Caco-2 (cell line): ENCODE measurements at regions of chr5 and their contacts with region 1.

Region 1: DNA sequence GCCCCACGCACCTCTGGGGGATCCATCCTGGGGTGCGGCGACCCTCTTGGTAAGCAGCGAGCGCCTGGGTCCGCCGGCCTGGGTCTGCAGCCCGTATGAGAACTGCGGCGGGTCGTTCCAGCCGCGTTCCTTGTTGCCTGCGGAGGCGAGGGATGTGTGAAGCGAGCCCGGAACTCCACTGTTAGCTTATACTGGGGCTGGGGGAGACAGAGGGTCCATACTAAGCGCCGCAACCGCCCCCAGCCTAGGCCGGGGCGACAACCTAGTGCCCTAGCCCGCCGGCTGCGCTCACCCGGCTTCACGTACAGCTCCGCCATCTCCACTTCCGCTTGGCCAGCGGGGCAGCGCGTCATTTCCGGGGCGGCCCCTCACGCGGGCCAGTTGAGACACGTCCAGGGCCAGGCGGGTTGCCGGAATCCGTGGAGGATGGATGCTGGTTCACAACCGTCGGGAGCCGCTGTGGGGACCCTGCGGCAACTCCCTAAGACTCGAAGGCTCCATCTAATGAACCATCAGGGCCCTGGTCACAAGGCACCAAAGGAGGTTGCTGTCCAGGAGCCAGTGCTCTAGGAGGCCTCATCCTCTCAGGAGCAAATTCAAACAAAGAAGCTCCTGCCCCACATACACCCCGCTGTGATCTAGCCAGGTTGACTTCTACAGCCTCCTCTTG is at the start of gene SRA1:
- DNase-seq: peak; percentile 93 to 94
- H3K4me3 ChIP-seq: peak within 1 kb of the TSS; percentile 79
- H3K4me3 Mint-ChIP-seq: peak within 1 kb of the TSS; percentile 87
- H3K27ac Mint-ChIP-seq: peak within 1 kb of the TSS; percentile 91
- H3K4me1 ChIP-seq: peaks cover 14% of the 10 kb centered on the region; the same call in 1 of the 2 replicates
- H3K4me1 Mint-ChIP-seq: peaks cover 35% of the 10 kb centered on the region
- H3K27me3 ChIP-seq: no peaks in the 10 kb centered on the region
- H3K27me3 Mint-ChIP-seq: no peaks in the 10 kb centered on the region
- CTCF ChIP-seq: peak in 1 of 2 experiments; percentile 1
- total RNA-seq, gene SRA1: 44.0 and 50.3 TPM in 2 replicates

Region 2: DNA sequence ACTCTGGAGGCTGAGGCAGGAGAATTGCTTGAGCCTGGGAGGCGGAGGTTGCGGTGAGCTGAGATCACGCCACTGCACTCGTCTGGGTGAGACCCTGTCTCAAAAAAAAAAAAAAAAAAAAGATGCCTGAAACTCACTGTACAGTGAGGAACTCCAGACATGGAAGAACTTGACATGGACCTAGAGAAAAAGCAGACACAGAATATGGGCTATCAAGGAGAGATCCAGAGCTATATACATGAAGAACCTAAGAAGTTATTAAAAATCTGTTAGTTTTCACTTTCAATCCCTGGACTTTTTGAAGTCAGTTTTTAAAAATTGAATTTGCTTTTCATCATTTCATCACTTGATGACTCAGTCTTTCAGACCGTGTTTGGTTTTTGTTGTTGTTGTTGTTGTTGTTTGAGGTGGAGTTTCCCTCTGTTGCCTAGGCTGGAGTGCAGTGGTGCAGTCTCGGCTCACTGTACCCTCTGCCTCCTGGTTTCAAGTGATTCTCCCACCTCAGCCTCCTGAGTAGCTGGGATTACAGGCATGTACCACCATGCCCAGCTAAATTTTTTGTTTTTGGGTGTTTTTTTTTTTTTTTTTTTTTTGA is 1195.3 kb before region 1 on chr5:
- CTCF ChIA-PET with region 1: no interaction called
- POLR2A ChIA-PET with region 1: no interaction called
- intact Hi-C with region 1: no loop called
- DNase-seq: no peak
- H3K4me3 ChIP-seq: no peak overlapping the region
- H3K4me3 Mint-ChIP-seq: no peak overlapping the region
- H3K27ac Mint-ChIP-seq: no peak overlapping the region
- H3K4me1 ChIP-seq: no peaks in the 10 kb centered on the region
- H3K4me1 Mint-ChIP-seq: no peaks in the 10 kb centered on the region
- H3K27me3 ChIP-seq: no peaks in the 10 kb centered on the region
- H3K27me3 Mint-ChIP-seq: no peaks in the 10 kb centered on the region
- CTCF ChIP-seq: no peak

Region 3: DNA sequence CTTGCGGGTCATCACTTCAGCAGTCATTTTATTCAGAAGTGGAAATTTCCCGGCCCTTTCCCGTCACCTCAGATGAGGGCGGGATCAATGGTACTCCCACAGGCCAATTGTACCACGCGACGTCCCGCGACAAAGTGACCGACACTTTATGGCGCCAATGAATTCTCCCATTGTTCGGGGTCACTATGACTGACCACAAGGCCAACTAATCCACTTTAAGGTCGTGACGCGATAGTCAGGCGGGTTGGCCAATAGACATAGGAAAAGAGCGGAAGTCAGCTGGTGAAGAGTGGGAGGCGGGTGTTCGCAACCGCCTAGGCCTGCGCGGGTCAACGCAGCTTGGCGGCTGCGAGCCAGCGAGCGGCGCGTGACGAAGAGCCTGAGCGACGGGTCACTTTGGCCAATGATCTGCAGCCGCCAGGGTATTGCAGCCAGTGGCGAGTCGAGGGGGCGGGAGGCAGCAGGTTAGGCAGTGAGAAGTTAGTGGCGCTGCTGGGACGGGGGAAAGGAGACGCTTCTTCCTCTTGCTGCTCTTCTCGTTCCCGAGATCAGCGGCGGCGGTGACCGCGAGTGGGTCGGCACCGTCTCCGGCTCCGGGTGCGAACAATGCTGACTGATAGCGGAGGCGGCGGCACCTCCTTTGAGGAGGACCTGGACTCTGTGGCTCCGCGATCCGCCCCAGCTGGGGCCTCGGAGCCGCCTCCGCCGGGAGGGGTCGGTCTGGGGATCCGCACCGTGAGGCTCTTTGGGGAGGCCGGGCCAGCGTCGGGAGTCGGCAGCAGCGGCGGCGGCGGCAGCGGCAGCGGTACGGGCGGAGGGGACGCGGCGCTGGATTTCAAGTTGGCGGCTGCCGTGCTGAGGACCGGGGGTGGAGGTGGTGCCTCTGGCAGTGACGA is 155.7 kb before region 1 on chr5 and contains the start of gene ANKHD1:
- CTCF ChIA-PET with region 1: no interaction called
- POLR2A ChIA-PET with region 1: no interaction called
- intact Hi-C with region 1: loop called (anchors 5 kb)
- DNase-seq: peak; percentile 99 to 100
- H3K4me3 ChIP-seq: peak within 1 kb of the TSS; percentile 72
- H3K4me3 Mint-ChIP-seq: no peak within 1 kb of the TSS
- H3K27ac Mint-ChIP-seq: no peak within 1 kb of the TSS
- H3K4me1 ChIP-seq: no peaks in the 10 kb centered on the region
- H3K4me1 Mint-ChIP-seq: peaks cover 7% of the 10 kb centered on the region
- H3K27me3 ChIP-seq: no peaks in the 10 kb centered on the region
- H3K27me3 Mint-ChIP-seq: no peaks in the 10 kb centered on the region
- CTCF ChIP-seq: no peak
- total RNA-seq, gene ANKHD1: 130 and 134 TPM in 2 replicates

Region 4: DNA sequence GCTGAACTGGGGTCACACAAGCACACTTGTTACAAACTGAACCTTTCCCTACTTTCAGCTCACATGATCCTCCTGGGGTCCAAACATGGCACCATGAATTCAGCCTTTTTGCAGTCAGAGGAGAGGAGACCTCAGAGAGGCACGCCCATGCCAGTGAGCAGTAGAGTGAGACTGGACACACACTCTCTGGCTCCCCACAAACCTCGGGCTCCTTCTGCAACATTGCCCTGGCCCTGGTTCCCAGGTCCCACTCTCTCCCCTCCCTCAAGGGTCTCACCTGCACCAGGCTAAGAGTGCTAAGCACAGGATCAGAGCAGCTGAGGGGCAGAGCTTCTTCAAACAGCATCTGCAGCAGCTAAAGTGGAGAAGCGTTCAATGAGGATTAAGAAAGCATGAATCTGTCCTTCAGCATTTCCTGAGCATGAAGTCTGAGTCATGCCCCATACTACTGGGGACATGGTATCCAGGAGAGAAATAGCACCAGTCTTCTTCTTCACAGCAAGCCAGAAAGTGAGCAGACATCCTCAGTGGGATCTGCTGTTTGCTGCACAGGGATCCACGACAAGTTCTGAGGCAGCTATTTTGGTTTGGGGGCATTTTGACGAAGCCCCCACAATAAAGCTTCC is 34.6 kb after region 1 on chr5:
- CTCF ChIA-PET with region 1: no interaction called
- POLR2A ChIA-PET with region 1: no interaction called
- intact Hi-C with region 1: no loop called
- DNase-seq: no peak
- H3K4me3 ChIP-seq: no peak overlapping the region
- H3K4me3 Mint-ChIP-seq: no peak overlapping the region
- H3K27ac Mint-ChIP-seq: no peak overlapping the region
- H3K4me1 ChIP-seq: no peaks in the 10 kb centered on the region
- H3K4me1 Mint-ChIP-seq: no peaks in the 10 kb centered on the region
- H3K27me3 ChIP-seq: no peaks in the 10 kb centered on the region
- H3K27me3 Mint-ChIP-seq: no peaks in the 10 kb centered on the region
- CTCF ChIP-seq: no peak

Region 5: GRCh38 chr5:140795259-140795641 is 238.0 kb after region 1 on chr5:
- CTCF ChIA-PET with region 1: no interaction called
- POLR2A ChIA-PET with region 1: no interaction called
- intact Hi-C with region 1: no loop called
- DNase-seq: peak in 1 of 2 experiments; percentile 12
- H3K4me3 ChIP-seq: no peak overlapping the region
- H3K4me3 Mint-ChIP-seq: no peak overlapping the region
- H3K27ac Mint-ChIP-seq: no peak overlapping the region
- H3K4me1 ChIP-seq: no peaks in the 10 kb centered on the region
- H3K4me1 Mint-ChIP-seq: no peaks in the 10 kb centered on the region
- H3K27me3 ChIP-seq: no peaks in the 10 kb centered on the region
- H3K27me3 Mint-ChIP-seq: no peaks in the 10 kb centered on the region
- CTCF ChIP-seq: no peak